PC-9 (cell line): ENCODE measurements at regions of chr12 and their contacts with region 1.

Region 1: GRCh38 chr12:1500095-1500801 is 94.1 kb downstream of the FBXL14 start:
- DNase-seq: peak; percentile 53 to 95
- H3K4me3 ChIP-seq: no peak overlapping the region
- H3K27ac ChIP-seq: peak overlapping the region; percentile 56
- H3K4me1 ChIP-seq: peaks cover 14% of the 10 kb centered on the region
- H3K27me3 ChIP-seq: no peaks in the 10 kb centered on the region
- CTCF ChIP-seq: no peak

Region 2: GRCh38 chr12:1130164-1130563 is 370.1 kb before region 1 on chr12:
- CTCF ChIA-PET with region 1: no interaction called
- POLR2A ChIA-PET with region 1: no interaction called
- intact Hi-C with region 1: loop called (anchors 1 kb)
- DNase-seq: peak; percentile 74 to 98
- H3K4me3 ChIP-seq: peak overlapping the region; percentile 13; the same call in 1 of the 2 replicates
- H3K27ac ChIP-seq: peak overlapping the region; percentile 69
- H3K4me1 ChIP-seq: peaks cover 34% of the 10 kb centered on the region
- H3K27me3 ChIP-seq: no peaks in the 10 kb centered on the region
- CTCF ChIP-seq: no peak

Region 3: DNA sequence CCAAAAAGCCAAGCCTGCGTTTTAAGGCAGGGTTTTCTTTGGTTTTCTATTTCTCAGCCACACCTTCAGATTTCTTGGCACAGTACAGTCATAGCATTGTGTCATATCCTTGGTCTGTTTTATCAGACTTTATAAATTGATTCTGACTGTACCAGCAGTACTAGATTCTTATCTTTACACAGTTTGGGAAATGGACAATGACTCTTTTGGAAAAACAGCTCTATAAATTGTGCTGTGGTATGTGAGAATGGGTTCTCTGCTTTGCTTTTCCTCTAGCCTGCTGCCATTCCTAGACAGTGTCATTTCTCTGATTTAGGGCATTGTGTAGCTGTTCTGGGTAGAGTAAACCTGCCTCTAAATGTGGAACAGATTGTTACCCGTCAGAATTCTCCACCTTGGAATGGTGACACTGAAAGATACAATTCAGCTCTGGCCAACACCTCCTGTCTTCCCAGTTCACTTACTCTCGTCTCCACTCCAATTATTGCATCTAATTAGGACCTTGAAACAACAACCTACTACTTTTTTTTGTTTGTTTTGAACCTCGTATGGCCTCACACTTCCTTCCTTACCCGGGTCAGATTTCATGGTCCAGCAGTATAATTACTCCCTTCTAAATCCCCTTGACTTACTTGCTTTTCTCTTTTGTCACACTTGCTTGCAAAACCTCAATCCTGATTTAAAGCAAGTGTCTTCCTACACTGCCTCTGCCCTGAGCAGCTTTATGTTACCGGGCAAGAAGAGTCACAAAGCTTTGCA is 282.9 kb before region 1 on chr12:
- CTCF ChIA-PET with region 1: no interaction called
- POLR2A ChIA-PET with region 1: interaction called, 10 read pairs
- intact Hi-C with region 1: no loop called
- DNase-seq: peak; percentile 33 to 95
- H3K4me3 ChIP-seq: peak overlapping the region; percentile 41
- H3K27ac ChIP-seq: peak overlapping the region; percentile 83
- H3K4me1 ChIP-seq: peaks cover 50% of the 10 kb centered on the region
- H3K27me3 ChIP-seq: no peaks in the 10 kb centered on the region
- CTCF ChIP-seq: no peak

Region 4: DNA sequence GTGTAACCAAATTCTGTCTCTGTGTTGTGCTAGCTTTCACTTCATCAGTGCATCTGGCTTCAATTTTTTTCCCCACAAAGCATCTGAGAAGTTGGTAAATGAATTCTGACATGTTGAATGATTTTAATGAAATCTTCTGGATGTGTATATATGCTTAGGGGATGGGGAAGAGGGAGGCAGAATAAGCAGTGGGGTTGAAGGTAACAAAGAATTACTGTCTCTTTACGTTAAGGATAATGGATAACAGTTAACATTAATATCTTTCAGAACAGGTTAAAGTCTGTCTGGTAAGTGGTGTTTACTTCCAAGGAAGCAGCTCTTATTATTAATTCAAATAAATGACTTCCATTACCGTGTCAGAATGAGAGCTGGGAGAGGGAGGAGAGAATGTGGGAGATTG is 247.5 kb before region 1 on chr12:
- CTCF ChIA-PET with region 1: no interaction called
- POLR2A ChIA-PET with region 1: no interaction called
- intact Hi-C with region 1: no loop called
- DNase-seq: no peak
- H3K4me3 ChIP-seq: no peak overlapping the region
- H3K27ac ChIP-seq: no peak overlapping the region
- H3K4me1 ChIP-seq: no peaks in the 10 kb centered on the region
- H3K27me3 ChIP-seq: no peaks in the 10 kb centered on the region
- CTCF ChIP-seq: no peak

Region 5: DNA sequence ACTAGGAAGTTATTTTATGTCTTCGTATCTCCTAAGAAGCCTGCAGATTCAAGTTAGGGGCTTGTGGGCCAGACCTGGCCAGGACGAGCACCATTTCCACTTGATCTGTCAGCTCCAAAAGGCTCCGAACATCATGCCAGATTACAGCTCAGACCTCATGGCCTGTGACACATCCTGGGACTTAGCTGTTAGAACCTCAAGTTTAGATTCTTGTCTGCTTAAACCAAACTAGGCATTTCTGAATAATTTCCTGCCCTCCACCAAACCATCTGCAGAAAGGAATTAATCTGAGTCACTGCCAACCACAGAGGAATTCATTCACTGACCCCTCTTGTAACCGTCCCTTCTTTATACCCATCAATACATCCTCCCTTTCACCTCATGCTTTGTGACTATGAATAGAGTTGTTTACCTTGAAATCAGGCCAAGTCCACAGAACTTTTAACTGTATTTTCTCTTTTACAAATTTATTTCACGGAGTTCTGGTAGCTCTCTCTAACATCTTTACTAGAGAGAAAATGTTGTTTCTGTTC is 26.1 kb before region 1 on chr12:
- CTCF ChIA-PET with region 1: no interaction called
- POLR2A ChIA-PET with region 1: interaction called, 6 read pairs
- intact Hi-C with region 1: loop called (anchors 2 kb)
- DNase-seq: peak; percentile 55 to 80
- H3K4me3 ChIP-seq: no peak overlapping the region
- H3K27ac ChIP-seq: peak overlapping the region; percentile 33
- H3K4me1 ChIP-seq: peaks cover 34% of the 10 kb centered on the region
- H3K27me3 ChIP-seq: no peaks in the 10 kb centered on the region
- CTCF ChIP-seq: no peak

Region 6: DNA sequence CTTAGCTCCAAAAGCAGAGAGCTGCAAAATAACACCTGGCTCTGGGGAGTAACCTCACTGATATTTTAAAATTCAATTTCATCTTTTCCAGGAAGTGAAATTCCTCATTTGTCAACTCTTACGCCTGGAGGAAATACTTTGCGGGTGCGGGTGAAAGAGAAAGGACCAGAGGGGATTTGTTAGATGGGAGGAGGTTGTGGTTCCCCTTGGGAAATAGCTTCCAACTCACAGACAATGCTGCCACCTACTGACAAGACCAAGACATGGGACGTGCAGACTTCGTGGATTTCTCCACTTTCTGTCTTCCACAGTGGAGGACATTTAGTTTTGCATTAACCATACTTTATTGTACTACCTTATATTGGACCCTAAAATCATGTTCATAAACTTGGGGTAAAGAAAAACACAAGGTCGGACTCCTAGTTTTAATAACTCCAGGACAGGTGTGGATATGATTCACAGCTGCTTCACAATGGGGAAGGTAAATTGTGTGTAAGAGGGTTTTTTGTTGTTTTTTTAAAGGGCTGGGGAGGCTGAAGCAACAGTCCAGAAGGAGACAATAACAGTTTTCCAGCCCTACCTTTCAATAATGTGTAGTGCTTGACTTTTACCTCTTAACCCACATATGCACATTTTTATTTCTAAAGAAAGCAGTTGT is 83.3 kb after region 1 on chr12:
- CTCF ChIA-PET with region 1: interaction called, 3 read pairs
- POLR2A ChIA-PET with region 1: no interaction called
- intact Hi-C with region 1: loop called (anchors 5 kb)
- DNase-seq: peak; percentile 73 to 77
- H3K4me3 ChIP-seq: peak overlapping the region; percentile 32; the same call in 1 of the 2 replicates
- H3K27ac ChIP-seq: no peak overlapping the region
- H3K4me1 ChIP-seq: peaks cover 6% of the 10 kb centered on the region
- H3K27me3 ChIP-seq: no peaks in the 10 kb centered on the region
- CTCF ChIP-seq: peak; percentile 98

Region 7: GRCh38 chr12:2101771-2102170 is 601.5 kb after region 1 on chr12:
- CTCF ChIA-PET with region 1: no interaction called
- POLR2A ChIA-PET with region 1: no interaction called
- intact Hi-C with region 1: no loop called
- DNase-seq: no peak
- H3K4me3 ChIP-seq: no peak overlapping the region
- H3K27ac ChIP-seq: no peak overlapping the region
- H3K4me1 ChIP-seq: no peaks in the 10 kb centered on the region
- H3K27me3 ChIP-seq: peaks cover 76% of the 10 kb centered on the region
- CTCF ChIP-seq: no peak